ENCODE measurements at regions of chr14 and their contacts with region 1.

Region 1: GRCh38 chr14:37230551-37231194 is 32.9 kb downstream of the MIPOL1 start:
- DNase-seq: peak; percentile 68
- H3K4me3 Mint-ChIP-seq: no peak overlapping the region
- H3K27ac Mint-ChIP-seq: no peak overlapping the region
- H3K4me1 Mint-ChIP-seq: no peaks in the 10 kb centered on the region
- H3K27me3 Mint-ChIP-seq: no peaks in the 10 kb centered on the region
- CTCF ChIP-seq: peak; percentile 63

Region 2: DNA sequence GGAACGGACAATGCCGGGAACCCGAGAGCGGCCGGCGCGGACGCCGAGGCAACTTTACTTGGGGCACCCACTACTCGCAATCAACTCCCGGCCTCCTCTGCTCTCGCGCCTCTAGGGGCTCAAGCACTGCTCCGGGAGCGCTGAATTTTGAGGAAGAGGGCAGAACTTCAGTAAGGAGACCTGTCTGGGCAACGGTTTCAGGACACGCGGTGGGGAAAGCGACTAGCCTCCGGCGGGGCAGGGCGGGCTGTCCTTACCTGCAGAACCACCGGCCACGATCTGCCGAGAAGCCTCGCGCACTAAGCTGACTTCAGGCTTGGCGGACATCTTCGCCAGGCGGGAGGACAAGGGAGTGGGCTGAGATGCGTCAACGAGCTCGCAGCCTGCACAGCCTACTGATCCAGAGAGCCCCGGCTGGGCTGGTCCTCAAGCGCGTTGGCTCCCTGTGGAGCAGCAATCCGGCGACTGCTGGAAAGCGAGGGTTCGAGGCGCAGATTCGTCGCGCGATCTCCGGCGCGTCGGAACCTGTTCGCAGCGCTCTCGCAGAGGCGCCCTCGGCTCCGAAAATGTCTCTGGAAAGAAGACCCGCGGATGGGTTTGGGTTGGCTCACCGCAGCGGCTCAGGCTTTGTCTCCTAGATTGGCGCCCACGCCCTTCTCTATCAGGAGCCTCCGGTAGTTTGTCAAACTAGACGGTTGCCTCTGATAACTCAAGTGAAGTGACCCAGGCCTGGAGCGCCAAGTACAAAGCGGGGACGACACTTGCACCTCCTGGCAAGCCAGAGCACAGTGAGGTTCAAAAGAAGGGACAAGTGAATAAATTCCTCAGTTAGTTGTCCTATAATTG is 58.4 kb before region 1 on chr14 and contains the start of gene SLC25A21:
- CTCF ChIA-PET with region 1: interaction called, 6 read pairs
- POLR2A ChIA-PET with region 1: interaction called, 7 read pairs
- intact Hi-C with region 1: loop called (anchors 1 kb)
- DNase-seq: peak; percentile 85
- H3K4me3 Mint-ChIP-seq: peak within 1 kb of the TSS; percentile 90
- H3K27ac Mint-ChIP-seq: peak within 1 kb of the TSS; percentile 95
- H3K4me1 Mint-ChIP-seq: peaks cover 5% of the 10 kb centered on the region
- H3K27me3 Mint-ChIP-seq: no peaks in the 10 kb centered on the region
- CTCF ChIP-seq: peak; percentile 11
- total RNA-seq, gene SLC25A21: 1.1 and 1.4 TPM in 2 replicates

Region 3: DNA sequence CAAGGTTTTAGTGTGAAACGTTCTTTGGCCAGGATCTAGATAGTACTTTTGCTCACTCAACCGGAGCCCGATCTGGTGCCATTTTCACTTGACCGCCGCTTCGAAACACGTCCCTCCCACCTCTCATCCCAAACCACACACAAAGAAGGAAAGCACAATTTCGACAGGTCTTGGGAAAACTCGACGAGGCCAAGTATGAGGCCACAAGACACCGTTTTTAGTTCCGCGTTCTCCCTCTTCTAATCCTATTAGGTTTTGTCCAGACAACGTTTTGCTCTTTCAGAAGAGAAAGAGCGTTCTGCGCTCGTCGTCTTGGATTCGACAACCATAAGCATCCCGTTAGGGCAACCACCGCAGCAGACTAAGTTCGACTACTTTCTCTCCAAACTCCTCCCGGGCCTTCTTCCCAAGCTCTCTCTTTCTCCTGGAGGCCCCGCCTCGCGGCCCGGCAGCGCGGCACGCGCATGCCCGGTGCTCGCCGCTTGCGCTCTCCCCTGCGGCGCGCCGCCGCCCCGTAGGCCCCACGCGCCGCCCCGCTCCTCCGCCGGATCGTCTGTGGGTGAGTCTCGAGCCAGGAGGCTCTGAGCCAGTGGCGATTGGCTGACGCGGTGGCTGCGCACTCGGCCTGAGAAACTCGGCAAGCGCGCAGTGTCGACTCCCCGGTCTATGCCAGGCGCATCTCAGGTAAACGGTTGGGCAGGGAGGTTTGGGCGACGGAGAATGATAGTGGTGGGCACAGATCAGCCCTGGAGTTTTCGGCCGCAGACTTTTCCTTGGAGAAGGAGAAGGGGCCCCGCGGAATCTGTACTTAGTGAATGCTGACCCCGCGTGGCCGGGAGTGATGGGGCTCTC is 33.0 kb before region 1 on chr14 and contains the start of gene MIPOL1:
- CTCF ChIA-PET with region 1: interaction called, 116 read pairs
- POLR2A ChIA-PET with region 1: interaction called, 9 read pairs
- intact Hi-C with region 1: no loop called
- DNase-seq: peak; percentile 85
- H3K4me3 Mint-ChIP-seq: peak within 1 kb of the TSS; percentile 95
- H3K27ac Mint-ChIP-seq: peak within 1 kb of the TSS; percentile 99
- H3K4me1 Mint-ChIP-seq: peaks cover 10% of the 10 kb centered on the region
- H3K27me3 Mint-ChIP-seq: no peaks in the 10 kb centered on the region
- CTCF ChIP-seq: no peak
- total RNA-seq, gene MIPOL1: 16.0 and 16.3 TPM in 2 replicates

Region 4: GRCh38 chr14:37241198-37241597 is 10.5 kb after region 1 on chr14:
- CTCF ChIA-PET with region 1: interaction called, 28 read pairs
- POLR2A ChIA-PET with region 1: no interaction called
- intact Hi-C with region 1: no loop called
- DNase-seq: no peak
- H3K4me3 Mint-ChIP-seq: no peak overlapping the region
- H3K27ac Mint-ChIP-seq: no peak overlapping the region
- H3K4me1 Mint-ChIP-seq: no peaks in the 10 kb centered on the region
- H3K27me3 Mint-ChIP-seq: no peaks in the 10 kb centered on the region
- CTCF ChIP-seq: no peak

Region 5: DNA sequence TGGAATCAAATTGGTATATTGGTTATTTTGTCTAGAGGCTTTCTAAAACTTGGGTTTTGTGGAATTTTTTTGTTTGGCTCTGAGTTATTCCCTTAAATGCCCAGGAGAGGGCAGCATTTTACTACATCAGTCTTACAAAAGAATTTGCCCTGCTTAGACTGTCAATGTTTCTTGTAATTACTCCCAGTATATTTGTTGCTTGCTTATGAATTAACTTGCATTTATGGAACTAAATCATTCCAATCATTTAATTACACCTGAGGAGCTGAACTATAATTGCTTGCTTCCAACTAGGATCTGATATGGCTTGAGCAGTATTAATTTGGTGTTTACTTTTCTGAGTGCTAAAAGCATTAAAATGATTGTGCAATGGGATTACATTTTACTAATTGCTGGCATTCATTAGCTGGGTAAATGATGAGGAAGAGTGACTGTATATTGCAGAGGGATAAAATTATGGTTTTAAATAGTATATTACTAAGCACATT is 15.8 kb after region 1 on chr14:
- CTCF ChIA-PET with region 1: interaction called, 28 read pairs
- POLR2A ChIA-PET with region 1: no interaction called
- intact Hi-C with region 1: no loop called
- DNase-seq: peak; percentile 64
- H3K4me3 Mint-ChIP-seq: no peak overlapping the region
- H3K27ac Mint-ChIP-seq: no peak overlapping the region
- H3K4me1 Mint-ChIP-seq: no peaks in the 10 kb centered on the region
- H3K27me3 Mint-ChIP-seq: no peaks in the 10 kb centered on the region
- CTCF ChIP-seq: peak; percentile 63

Region 6: GRCh38 chr14:37874429-37875191 is 643.9 kb after region 1 on chr14:
- CTCF ChIA-PET with region 1: interaction called, 13 read pairs
- POLR2A ChIA-PET with region 1: interaction called, 4 read pairs
- intact Hi-C with region 1: loop called (anchors 5 kb)
- DNase-seq: peak; percentile 83
- H3K4me3 Mint-ChIP-seq: no peak overlapping the region
- H3K27ac Mint-ChIP-seq: no peak overlapping the region
- H3K4me1 Mint-ChIP-seq: peaks cover 22% of the 10 kb centered on the region
- H3K27me3 Mint-ChIP-seq: no peaks in the 10 kb centered on the region
- CTCF ChIP-seq: peak; percentile 77